ENCODE measurements at regions of chr5 and their contacts with region 1.

Region 1: GRCh38 chr5:134145779-134146581 is 30.8 kb downstream of the SKP1 start:
- DNase-seq: peak; percentile 81
- CTCF ChIP-seq: peak; percentile 89

Region 2: DNA sequence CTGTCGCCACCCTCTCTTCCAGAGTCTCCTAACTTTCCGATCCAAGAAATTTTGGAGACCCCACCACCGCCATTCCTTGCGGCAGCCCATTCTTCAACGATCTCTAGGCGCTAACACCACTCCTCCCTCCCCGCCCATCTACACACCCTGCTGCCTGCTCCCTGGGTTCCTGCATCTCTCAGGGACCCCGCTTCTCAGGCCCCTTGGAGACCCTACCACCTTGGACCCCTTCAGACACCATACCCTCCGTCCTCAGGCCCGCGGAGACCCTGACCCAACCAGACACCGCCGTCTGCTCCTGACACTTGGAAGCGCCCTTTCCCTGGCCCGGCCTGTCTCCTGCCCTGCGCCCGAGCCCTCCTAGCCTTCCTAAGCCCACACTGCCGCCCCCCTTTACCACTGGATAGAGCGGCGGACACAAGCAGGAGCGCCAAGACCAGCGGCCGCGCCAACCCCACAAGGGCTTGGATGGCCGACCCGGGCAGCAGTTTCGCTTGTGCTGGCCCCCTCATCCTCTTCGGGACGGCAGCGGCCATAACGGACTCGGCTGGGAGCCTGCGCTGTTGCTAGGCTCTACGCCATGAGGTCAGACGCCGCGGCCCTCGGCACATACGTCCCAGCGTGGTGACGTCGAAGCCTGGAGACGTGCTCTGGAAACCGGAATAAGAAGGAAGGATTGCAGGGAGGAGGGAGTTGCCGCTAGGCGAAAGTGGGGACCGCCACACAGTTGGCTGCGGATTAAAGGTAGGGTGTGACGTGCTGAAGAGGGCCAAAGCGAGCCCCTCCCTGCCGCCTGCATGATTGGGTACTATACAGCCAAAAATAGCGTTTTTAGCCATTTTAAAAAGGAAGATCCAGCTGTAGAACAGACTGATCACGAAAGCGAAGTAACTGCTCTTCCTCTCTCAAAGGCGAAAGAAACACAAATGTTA is 177.7 kb before region 1 on chr5 and contains the start of gene C5orf15:
- in situ Hi-C with region 1: no loop called
- DNase-seq: peak; percentile 92
- CTCF ChIP-seq: no peak

Region 3: DNA sequence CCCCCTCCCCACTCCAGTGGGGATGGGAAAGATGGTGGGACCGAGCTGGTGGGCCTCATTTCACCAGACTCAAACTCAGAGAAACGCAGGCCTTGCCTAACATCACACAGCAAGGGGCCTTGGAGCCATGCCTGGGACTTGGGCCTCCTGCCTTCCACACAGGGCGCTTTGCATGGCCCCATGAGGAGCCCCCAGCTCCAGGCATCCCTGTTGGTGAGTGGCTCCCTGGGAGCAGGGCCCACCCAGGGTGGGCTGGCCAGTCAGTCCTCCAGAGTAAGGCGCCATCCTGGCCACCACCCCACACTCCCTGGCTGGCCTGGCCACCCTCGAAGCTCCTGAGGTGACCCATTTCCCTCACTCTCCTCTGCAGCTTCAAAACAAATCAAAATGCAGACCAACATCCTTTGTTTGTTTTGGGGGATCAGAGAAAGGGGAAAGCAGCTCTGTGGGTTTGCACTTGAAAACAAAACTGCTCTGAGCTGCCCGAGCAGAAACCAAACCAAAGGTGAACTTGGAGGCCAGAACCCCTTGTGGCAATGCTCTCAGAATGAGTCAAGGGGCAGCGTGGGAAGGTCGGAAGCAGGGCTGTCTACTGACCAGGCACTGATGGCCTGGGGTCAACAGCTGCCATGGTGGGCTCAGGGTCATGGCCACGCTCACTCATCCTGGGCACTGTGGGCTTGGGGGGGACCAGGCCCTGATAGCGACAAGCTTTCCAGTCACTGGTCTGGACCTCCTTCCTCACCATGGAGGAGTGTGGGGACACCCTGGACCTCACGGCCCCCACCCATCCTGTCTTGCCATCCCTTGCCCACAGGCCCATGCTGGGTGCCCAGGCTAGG is 104.2 kb before region 1 on chr5:
- in situ Hi-C with region 1: loop called (anchors 5 kb)
- DNase-seq: peak; percentile 81
- CTCF ChIP-seq: no peak